OCI-LY7 (cell line): ENCODE measurements at regions of chr1 and their contacts with region 1.

Region 1: GRCh38 chr1:15100121-15100874 is 53.2 kb upstream of the TMEM51 start:
- DNase-seq: peak; percentile 68
- H3K4me3 ChIP-seq: no peak overlapping the region
- H3K27ac ChIP-seq: no peak overlapping the region
- H3K4me1 ChIP-seq: peaks cover 11% of the 10 kb centered on the region
- CTCF ChIP-seq: peak; percentile 92

Region 2: GRCh38 chr1:14094611-14095400 is 1005.5 kb before region 1 on chr1:
- CTCF ChIA-PET with region 1: no interaction called
- POLR2A ChIA-PET with region 1: no interaction called
- intact Hi-C with region 1: loop called (anchors 10 kb)
- DNase-seq: peak; percentile 71
- H3K4me3 ChIP-seq: no peak overlapping the region
- H3K27ac ChIP-seq: no peak overlapping the region
- H3K4me1 ChIP-seq: peaks cover 11% of the 10 kb centered on the region
- CTCF ChIP-seq: peak; percentile 88

Region 3: DNA sequence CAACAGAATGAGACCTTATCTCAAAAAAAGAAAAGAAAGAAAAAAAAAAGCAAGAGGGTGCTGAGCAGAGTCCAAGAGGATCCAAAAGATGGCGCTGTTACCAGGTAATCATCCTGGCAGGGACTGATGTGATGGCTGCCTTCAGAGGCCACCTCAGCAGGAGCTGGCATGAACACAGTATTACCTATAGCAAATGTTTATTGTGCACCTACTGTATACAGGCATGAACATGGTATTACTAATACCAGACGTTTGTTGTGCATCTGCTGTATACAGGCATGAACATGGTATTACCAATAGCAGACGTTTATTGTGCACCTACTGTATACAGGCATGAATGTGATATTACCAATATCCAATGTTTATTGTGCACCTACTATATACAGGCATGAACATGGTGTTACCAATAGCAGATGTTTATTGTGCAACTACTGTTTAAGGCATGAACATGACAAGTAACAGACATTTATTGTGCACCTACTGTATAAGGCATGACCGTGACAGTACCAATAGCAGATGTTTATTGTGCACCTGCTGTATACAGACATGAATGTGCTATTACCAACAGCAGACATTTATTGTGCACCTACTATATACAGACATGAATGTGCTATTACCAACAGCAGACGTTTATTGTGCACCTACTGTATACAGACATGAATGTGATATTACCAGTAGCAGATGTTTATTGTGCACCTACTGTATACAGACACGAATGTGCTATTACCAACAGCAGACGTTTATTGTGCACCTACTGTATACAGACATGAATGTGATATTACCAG is 61.9 kb before region 1 on chr1:
- CTCF ChIA-PET with region 1: no interaction called
- POLR2A ChIA-PET with region 1: no interaction called
- intact Hi-C with region 1: loop called (anchors 1 kb)
- DNase-seq: peak; percentile 73
- H3K4me3 ChIP-seq: no peak overlapping the region
- H3K27ac ChIP-seq: no peak overlapping the region
- H3K4me1 ChIP-seq: peaks cover 11% of the 10 kb centered on the region
- CTCF ChIP-seq: peak; percentile 79

Region 4: DNA sequence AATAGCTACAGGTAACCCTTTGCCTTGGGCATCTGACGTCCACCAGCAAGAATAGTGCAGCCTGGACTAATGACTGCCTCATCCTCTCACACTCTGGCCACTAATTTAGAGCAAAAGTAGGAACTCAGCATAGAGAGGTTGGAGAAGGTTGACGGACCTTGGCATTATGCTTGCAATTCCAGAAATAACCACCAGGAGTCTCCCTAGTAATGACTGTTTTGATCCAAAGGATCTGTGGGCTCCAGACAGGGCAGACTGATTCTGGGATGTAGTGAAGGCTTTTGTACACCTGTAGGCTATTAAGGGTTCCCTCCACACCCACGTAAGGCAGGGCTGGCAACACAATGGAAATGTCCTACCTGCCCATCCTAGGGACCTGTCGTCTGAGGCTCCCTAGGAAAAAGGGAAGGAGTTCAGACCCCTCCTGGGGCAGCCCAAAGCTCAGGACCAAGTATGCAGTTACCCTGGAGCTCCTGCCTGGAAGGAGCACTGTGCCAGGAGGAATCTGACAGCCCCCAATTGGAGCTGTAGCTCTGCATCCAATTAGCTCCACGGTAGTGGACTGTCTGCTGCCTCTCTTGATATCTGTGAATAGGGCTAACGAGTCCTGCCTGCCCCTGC is 37.7 kb before region 1 on chr1:
- CTCF ChIA-PET with region 1: no interaction called
- POLR2A ChIA-PET with region 1: no interaction called
- intact Hi-C with region 1: loop called (anchors 5 kb)
- DNase-seq: no peak
- H3K4me3 ChIP-seq: no peak overlapping the region
- H3K27ac ChIP-seq: no peak overlapping the region
- H3K4me1 ChIP-seq: no peaks in the 10 kb centered on the region
- CTCF ChIP-seq: peak; percentile 76